Breast epithelium (tissue), 4 donors: ENCODE measurements at regions of chr17 and their contacts with region 1.

Region 1: GRCh38 chr17:17812211-17813057 is 24.4 kb downstream of the SREBF1 start:
- DNase-seq: peak; percentile 69 to 79
- H3K4me3 ChIP-seq: peak overlapping the region in 2 of 3 donors; percentile 3 to 47
- H3K27ac ChIP-seq: peak overlapping the region; percentile 52 to 78
- H3K4me1 ChIP-seq: peaks cover 11 to 15% of the 10 kb centered on the region in 2 donors
- H3K27me3 ChIP-seq: no peaks in the 10 kb centered on the region
- CTCF ChIP-seq: peak; percentile 99 to 100 (median 100)
- POLR2A ChIP-seq: no peak

Region 2: GRCh38 chr17:17766077-17766743 is 46.2 kb before region 1 on chr17:
- intact Hi-C with region 1: no loop called
- DNase-seq: no peak
- H3K4me3 ChIP-seq: no peak overlapping the region
- H3K27ac ChIP-seq: no peak overlapping the region
- H3K4me1 ChIP-seq: peaks cover 7 to 22% of the 10 kb centered on the region in 2 donors
- H3K27me3 ChIP-seq: no peaks in the 10 kb centered on the region
- CTCF ChIP-seq: no peak
- POLR2A ChIP-seq: no peak

Region 3: DNA sequence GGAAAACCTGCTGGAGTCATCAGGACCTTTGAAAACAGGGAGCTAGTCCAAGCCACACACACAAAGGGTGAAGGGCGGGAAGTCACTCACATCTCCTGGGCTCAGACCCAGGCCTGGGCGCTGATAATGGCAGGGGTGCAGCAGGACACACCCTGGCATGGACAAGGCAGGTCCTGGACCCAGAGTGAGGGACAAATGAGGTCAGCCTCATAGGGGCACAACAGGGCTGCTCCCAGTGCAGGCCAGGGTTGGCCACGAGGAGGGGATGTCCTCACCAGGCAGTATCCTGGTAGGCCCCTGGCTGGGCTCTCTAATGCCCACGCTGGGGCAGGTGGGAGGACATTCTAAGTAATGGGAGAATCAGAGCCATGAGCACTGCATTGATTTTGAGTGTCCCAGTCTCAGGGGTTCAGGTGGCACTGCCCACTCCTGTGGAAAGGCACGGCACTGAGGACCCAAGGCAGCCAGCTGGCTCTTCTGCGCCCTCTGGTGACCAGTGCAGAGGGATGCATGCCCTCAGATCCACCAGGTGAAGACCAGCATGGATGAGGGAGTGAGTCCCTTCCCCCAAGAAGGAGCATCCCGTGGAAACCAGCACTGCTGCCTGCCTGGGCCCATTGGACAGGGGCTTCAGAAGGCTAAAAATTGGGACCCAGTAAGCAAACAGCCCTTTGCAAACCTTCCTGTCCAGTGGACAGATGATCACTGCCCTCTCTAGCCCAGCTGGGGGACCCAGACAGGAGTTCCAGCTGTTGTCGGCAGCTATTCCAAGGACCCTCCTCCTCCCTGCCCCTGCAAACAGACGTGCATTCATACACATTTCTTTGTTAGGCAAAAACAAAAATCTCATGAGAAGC is 47.7 kb after region 1 on chr17:
- intact Hi-C with region 1: loop called (anchors 5 kb)
- DNase-seq: peak; percentile 52 to 67
- H3K4me3 ChIP-seq: no peak overlapping the region
- H3K27ac ChIP-seq: no peak overlapping the region
- H3K4me1 ChIP-seq: no peaks in the 10 kb centered on the region
- H3K27me3 ChIP-seq: no peaks in the 10 kb centered on the region
- CTCF ChIP-seq: peak; percentile 82 to 98 (median 95)
- POLR2A ChIP-seq: no peak

Region 4: DNA sequence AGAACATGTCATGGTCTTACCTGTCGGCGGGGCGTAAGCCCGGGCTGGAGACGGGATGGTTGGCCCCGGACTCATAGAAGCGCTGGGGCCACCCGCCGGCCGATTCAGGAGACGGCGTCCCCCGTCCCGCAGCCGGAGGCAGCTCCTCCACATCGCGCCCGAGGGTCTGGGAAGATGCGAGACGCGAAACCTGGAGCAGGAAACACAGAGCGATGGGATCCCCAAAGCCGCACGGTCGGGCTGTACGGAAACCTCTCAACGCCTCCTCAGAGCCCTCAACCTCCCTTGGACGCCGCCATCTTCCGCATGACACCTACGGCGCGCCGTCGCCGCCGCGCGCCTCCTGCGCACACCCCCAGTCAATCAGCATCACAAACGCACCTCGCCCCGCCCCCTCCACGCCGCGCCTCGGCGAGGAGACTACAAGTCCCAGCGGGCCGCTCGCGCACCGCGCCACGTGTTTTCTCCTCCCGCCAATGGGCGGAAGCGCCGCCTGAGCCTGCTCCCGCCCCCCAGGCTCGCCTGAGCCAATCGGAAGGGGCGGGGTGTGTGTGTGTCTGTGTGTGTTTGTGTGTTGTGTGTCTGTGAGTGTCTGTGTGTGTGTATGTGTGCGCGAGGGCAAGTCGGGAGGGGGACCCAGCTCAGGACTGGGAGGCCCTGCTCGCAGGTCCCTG is 226.6 kb after region 1 on chr17 and contains the starts of genes ATPAF2 and GID4:
- intact Hi-C with region 1: loop called (anchors 10 kb)
- DNase-seq: peak; percentile 99 to 100
- H3K4me3 ChIP-seq: peak within 1 kb of the TSS; percentile 81 to 99 (median 91)
- H3K27ac ChIP-seq: peak within 1 kb of the TSS; percentile 61 to 90
- H3K4me1 ChIP-seq: peaks cover 16 to 28% of the 10 kb centered on the region in 2 donors
- H3K27me3 ChIP-seq: no peaks in the 10 kb centered on the region
- CTCF ChIP-seq: no peak
- POLR2A ChIP-seq: no peak
- total RNA-seq, gene ATPAF2: 12.9 to 15.7 (median 13.0) TPM
- total RNA-seq, gene GID4: 11.1 to 23.8 (median 12.1) TPM